ENCODE measurements at regions of chr14 and their contacts with region 1.

Region 1: GRCh38 chr14:102524466-102525218 is 15.1 kb upstream of the ANKRD9 start:
- DNase-seq: peak; percentile 78
- H3K4me3 ChIP-seq: peak overlapping the region; percentile 73
- CTCF ChIP-seq: peak; percentile 99

Region 2: DNA sequence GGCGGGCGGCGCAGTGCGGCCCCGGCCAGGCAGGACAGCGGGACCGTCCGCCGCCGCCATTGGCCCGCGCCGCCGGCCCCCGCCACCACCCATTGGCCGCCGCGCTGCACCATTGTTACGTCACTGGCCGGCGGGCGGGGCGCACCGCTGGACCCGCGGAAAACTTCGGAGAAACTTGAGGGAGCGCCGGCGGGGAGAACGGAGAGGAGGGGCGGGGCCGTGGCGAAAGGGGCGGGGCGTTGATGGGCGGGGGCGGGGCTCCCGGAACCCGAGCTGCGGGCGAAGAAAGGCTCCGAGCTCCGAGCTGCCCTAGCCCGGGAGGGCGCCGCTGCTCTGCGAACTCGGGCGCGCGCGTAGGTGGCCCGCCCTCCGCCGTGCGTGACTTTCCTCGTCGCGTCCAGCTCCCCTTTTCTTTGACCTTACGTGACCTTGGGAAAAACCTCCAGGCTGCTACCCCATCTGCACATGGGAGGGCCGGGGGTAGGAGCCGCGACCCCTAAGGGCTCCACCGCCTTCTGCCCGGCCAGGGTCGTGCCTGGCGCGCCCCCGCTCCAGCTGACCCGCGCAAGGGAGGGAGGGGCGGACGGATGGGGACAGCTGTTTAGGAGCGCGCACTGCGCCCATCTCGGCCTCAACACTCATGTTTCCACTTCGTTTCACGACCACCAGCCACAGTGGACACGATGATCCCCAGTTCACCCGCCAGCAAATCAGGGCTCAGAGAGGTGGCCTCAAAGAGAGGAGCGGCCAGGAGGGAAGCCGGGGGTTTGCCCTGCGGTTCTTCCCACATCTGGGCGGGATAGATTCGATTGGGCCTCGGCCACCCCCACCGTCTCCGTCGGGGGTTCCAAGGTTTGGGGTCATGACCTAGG is 14.7 kb before region 1 on chr14 and contains the start of gene ANKRD9:
- CTCF ChIA-PET with region 1: interaction called, 21 read pairs
- POLR2A ChIA-PET with region 1: no interaction called
- DNase-seq: peak; percentile 23
- H3K4me3 ChIP-seq: peak within 1 kb of the TSS; percentile 64
- CTCF ChIP-seq: no peak

Region 3: DNA sequence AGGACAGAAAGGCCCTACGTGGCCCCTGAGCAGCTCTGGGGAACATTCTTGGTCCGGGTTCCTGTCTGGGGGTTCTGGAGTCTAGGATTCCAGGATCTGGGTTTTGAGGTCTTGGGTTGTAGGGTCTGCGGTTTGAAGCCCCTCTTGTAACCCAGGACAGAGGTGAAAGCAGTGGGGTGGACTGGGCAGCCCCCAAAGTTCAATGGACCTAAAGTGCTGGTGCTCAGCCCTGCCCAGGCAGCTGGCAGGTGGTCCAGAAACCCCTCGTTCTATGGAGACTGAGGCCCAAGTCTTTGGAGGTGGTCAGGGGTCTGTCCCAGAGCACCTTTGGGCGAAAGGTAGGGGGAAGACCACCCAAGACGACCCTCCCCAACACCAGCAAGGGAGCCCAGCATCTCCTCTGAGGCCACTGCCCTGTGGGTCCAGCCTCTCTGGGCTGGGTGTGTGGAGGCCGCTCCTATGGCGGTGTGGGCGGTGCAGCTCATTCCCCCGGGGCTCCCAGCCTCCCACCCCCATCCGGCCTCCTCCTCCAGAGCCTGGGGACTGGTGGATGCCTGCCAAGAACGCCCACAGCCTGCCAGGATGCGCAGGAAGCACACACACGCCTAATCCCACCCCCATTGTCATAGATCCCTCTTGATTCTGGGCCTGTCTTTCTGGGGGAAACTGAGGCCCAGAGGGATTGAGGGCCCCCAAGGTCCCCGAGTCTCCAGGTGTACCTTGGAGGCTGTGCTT is 15.1 kb after region 1 on chr14:
- CTCF ChIA-PET with region 1: interaction called, 33 read pairs
- POLR2A ChIA-PET with region 1: no interaction called
- DNase-seq: no peak
- H3K4me3 ChIP-seq: no peak overlapping the region
- CTCF ChIP-seq: no peak

Region 4: DNA sequence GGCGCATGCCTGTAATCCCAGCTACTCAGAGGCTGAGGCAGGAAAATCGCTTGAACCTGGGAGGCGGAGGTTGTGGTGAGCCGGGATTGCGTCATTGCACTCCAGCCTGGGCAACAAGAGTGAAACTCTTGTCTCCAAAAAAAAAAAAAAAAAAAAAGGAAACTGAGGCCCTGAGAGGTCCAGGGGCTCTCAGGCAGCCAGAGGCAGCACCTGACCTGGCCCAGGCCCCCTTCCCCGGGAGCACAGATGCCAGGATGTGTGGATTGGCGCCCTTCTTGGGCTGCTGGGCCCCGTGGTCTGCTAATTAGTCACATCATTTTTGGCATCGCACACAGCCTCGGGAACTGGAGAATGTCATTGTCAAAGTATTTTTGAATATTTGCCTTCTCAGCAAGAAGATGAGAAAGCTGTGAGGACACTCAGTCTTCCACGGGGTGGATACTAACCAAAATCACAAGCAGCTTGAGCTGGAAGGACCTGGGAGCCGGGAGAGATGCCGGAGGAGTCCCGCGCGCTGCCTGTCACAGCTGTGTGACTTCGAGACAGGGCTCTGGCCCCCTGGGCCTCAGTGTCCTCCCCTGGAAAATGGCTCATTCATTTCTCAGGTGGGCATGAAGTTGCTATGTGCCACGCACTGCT is 55.2 kb after region 1 on chr14:
- CTCF ChIA-PET with region 1: interaction called, 11 read pairs
- POLR2A ChIA-PET with region 1: interaction called, 5 read pairs
- DNase-seq: peak; percentile 51
- H3K4me3 ChIP-seq: no peak overlapping the region; the same call in 1 of the 2 replicates
- CTCF ChIP-seq: no peak

Region 5: GRCh38 chr14:102601378-102602273 is 77.0 kb after region 1 on chr14:
- CTCF ChIA-PET with region 1: no interaction called
- POLR2A ChIA-PET with region 1: no interaction called
- DNase-seq: no peak
- H3K4me3 ChIP-seq: no peak overlapping the region
- CTCF ChIP-seq: no peak